Activated CD4-positive, alpha-beta T cell treated with anti-CD3 and anti-CD28 coated beads, Interleukin-2, amount 10 ng/mL, durations not matched to agents 24 days and 14 days (primary cell): ENCODE measurements at regions of chr10 and their contacts with region 1.

Region 1: DNA sequence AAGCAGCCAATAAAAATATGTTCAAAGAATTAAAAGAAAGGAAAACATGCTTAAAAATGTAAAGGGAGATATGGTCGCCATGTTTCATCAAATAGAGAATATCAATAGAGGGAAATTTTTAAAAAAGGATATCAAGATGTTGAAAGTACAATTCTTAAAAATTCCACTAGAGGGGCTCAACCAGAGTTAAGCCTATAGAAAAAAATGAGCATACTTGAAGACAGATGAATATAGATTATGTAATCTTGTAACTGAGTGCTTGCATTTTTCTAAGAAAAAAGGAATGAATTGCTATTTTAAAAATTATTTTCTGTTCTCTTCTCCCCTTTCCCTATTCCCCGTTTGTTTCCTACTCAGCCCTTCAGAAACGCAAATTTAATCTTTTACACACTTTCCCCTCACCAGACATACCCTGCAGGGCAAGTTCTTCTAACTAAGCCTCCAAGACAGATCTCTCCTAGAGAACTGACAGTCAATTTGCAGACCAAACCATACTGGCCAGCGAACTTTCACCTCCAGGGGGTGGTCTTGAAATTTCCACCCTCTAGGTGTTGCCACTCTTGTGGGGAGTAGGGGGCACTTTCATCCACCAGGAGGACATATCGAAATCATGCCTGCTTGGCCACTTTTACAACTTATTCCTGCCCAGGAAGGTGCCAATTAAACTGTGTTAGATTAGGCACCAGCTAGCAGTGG is 67.7 kb downstream of the NSUN6 start:
- DNase-seq: no peak
- H3K4me3 Mint-ChIP-seq: peak overlapping the region; percentile 18
- H3K27ac Mint-ChIP-seq: no peak overlapping the region
- H3K4me1 Mint-ChIP-seq: peaks cover 29% of the 10 kb centered on the region
- H3K27me3 Mint-ChIP-seq: no peaks in the 10 kb centered on the region

Region 2: DNA sequence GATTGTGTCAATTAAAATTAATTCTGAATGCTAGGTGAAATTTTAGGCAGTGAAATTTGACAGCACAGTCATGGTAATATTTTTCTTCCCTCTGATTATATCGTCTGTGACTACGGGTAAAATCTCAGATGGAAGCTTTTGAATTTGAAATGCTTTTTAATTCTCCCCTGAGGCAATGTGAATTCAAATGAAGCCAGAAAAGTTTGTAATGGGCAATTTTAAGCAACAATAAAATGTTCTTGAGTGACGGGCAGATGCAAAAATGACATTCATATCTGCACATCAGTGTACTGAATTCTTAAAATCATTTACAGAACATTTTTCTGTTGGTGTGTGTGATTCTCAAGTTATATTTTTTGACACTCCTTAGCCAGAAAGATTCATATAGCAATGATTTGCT is 66.9 kb before region 1 on chr10:
- intact Hi-C with region 1: no loop called
- DNase-seq: no peak
- H3K4me3 Mint-ChIP-seq: no peak overlapping the region
- H3K27ac Mint-ChIP-seq: no peak overlapping the region
- H3K4me1 Mint-ChIP-seq: no peaks in the 10 kb centered on the region
- H3K27me3 Mint-ChIP-seq: no peaks in the 10 kb centered on the region

Region 3: GRCh38 chr10:18651324-18652007 is 67.7 kb after region 1 on chr10 and contains the start of gene NSUN6:
- intact Hi-C with region 1: loop called (anchors 2 kb)
- DNase-seq: peak; percentile 98
- H3K4me3 Mint-ChIP-seq: peak within 1 kb of the TSS; percentile 95
- H3K27ac Mint-ChIP-seq: peak within 1 kb of the TSS; percentile 95
- H3K4me1 Mint-ChIP-seq: peaks cover 36% of the 10 kb centered on the region
- H3K27me3 Mint-ChIP-seq: peaks cover 2% of the 10 kb centered on the region
- total RNA-seq, gene NSUN6: 15.0 and 17.8 TPM in 2 replicates

Region 4: GRCh38 chr10:18659120-18659818 is 75.5 kb after region 1 on chr10 and contains the start of gene ARL5B:
- intact Hi-C with region 1: loop called (anchors 2 kb)
- DNase-seq: peak; percentile 98
- H3K4me3 Mint-ChIP-seq: peak within 1 kb of the TSS; percentile 96
- H3K27ac Mint-ChIP-seq: peak within 1 kb of the TSS; percentile 97
- H3K4me1 Mint-ChIP-seq: peaks cover 35% of the 10 kb centered on the region
- H3K27me3 Mint-ChIP-seq: no peaks in the 10 kb centered on the region
- total RNA-seq, gene ARL5B: 17.0 and 17.5 TPM in 2 replicates

Region 5: DNA sequence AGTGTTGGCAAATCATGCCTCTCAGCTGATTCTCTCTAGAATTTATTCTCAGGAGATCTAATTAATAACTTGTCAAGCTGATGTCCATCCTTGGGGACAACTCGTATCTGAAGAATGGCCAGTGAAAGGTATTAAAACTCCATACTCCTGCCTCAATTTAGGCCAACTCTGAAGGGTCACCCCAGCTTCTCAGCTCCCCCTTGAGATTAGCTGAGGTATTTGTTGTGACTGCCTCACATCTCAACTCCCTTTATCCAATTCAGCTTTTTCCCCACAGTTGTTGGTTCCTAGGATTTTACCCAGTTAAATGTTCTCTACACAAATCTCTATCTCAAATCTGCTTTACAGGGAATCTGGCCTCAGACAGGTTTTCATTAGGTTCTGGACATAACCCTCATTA is 647.3 kb after region 1 on chr10:
- intact Hi-C with region 1: no loop called
- DNase-seq: no peak
- H3K4me3 Mint-ChIP-seq: no peak overlapping the region
- H3K27ac Mint-ChIP-seq: no peak overlapping the region
- H3K4me1 Mint-ChIP-seq: no peaks in the 10 kb centered on the region
- H3K27me3 Mint-ChIP-seq: no peaks in the 10 kb centered on the region